ENCODE measurements at regions of chr1 and their contacts with region 1.

Region 1: DNA sequence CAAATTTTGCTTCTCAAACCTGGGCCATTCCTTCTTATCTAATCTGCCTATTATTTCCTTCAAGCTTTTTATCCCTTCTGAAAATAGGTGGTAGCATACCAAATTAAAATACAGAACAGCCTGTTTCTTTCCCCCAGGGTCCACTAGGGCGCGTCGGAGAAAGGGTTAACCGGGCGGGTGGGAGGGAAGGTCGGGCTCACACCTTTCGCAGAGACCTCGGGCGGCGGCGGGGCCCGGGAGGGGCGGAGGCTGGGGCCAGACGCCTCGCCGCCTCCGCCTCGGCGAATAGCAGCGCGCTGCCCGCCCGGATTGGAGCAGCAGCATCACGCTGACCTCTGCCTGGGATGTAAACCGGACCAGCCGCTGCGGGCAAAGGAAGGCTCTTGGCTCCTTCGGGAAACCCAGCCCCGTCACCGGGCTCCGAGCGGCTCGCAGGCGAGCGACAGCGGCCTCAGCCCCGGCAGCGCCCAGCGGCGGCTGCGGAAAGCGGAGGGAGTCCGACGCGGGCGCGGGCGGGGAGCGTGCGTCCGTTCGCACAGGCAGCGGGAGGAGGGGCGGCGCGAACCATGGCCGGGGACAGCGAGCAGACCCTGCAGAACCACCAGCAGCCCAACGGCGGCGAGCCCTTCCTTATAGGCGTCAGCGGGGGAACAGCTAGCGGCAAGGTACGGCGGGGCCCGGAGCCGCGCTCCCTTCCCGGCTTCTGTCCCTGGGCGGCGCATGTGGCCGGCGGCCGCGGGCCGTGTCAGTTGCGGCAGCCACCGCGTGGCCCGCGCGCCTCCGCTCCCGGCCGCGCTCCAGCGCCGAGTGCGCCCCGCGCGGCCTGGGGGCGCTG is at the start of gene UCK2:
- DNase-seq: peak; percentile 43
- H3K4me3 ChIP-seq: peak within 1 kb of the TSS; percentile 88
- H3K27ac ChIP-seq: peak within 1 kb of the TSS; percentile 86
- H3K27me3 ChIP-seq: no peaks in the 10 kb centered on the region
- CTCF ChIP-seq: no peak
- polyA plus RNA-seq, gene UCK2: 52.7 and 59.1 TPM in 2 replicates

Region 2: DNA sequence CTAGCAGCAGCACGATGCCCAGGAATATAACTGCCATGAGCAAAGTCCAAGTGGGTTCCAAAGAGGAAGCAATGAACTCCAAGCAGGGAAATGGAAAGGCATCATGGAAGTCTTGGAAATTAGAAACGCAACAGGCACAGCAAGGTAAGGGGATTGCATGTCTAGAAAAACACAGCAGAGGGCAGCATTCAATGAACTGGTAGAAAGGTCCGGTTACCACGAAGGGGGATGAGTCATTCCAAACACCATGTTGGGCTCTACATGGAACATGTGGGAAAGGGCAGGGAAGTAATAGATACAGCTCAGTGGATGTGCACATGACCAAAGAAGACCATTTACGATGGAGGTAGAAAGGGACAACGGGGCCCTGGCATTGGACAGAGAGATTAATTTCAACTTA is 419.0 kb before region 1 on chr1:
- CTCF ChIA-PET with region 1: no interaction called
- POLR2A ChIA-PET with region 1: no interaction called
- DNase-seq: no peak
- H3K4me3 ChIP-seq: no peak overlapping the region
- H3K27ac ChIP-seq: no peak overlapping the region
- H3K27me3 ChIP-seq: peaks cover 2% of the 10 kb centered on the region
- CTCF ChIP-seq: no peak

Region 3: DNA sequence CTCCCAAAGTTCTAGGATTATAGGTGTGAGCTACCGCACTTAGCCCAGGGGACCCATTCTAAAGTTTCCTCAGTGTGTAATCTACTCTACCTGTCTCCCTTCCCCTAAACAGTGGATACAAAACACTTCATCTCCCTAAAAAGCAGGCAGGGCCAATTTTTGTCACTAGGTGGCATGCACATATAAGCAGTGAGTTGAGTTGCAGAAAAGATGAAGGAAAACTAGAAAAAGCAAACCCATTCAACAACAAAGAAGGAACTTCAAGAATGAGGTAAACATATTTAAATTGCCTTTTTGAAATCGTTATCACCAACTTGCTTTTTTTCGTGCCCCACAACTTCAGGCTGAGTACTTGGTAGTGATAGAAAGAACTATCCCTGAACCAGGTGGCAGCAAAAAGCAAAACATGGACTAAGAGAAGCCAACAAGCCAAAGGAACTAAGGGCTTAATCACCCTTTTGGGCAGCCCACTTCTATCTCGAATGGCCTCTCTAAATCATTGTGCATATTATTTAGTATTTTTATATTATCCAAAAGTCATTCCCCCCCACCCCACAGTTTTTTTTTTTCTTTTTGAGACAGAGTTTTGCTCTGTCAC is 109.5 kb before region 1 on chr1:
- CTCF ChIA-PET with region 1: interaction called, 16 read pairs
- POLR2A ChIA-PET with region 1: no interaction called
- DNase-seq: peak; percentile 33
- H3K4me3 ChIP-seq: no peak overlapping the region
- H3K27ac ChIP-seq: no peak overlapping the region
- H3K27me3 ChIP-seq: no peaks in the 10 kb centered on the region
- CTCF ChIP-seq: peak; percentile 95

Region 4: GRCh38 chr1:165768513-165769394 is 58.7 kb before region 1 on chr1 and contains the start of gene TMCO1:
- CTCF ChIA-PET with region 1: interaction called, 7 read pairs
- POLR2A ChIA-PET with region 1: interaction called, 20 read pairs
- DNase-seq: peak; percentile 97
- H3K4me3 ChIP-seq: peak within 1 kb of the TSS; percentile 88
- H3K27ac ChIP-seq: peak within 1 kb of the TSS; percentile 94
- H3K27me3 ChIP-seq: no peaks in the 10 kb centered on the region
- CTCF ChIP-seq: peak; percentile 36
- polyA plus RNA-seq, gene TMCO1: 188 and 200 TPM in 2 replicates

Region 5: DNA sequence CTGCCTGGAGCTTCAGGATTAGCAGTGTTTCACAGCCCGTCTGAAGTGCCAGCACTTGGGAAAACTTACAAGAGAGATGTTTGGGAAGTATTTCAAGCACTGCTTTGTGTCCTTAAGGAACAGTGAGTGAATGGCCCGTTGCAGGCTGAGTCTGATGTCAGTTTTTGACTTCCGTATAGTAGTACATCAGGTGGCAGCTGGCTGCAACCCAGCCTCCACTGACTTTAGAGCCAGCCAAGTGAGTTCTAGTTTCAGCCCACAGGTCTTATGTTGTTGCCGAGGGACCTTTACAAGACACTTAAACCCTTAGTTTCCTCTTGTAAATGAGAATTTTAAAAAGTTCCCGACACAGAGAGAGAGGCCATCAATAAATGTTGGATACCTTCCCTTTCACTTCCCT is 35.0 kb after region 1 on chr1:
- CTCF ChIA-PET with region 1: no interaction called
- POLR2A ChIA-PET with region 1: no interaction called
- DNase-seq: no peak
- H3K4me3 ChIP-seq: no peak overlapping the region
- H3K27ac ChIP-seq: no peak overlapping the region
- H3K27me3 ChIP-seq: no peaks in the 10 kb centered on the region
- CTCF ChIP-seq: no peak

Region 6: GRCh38 chr1:165898837-165899236 is 71.4 kb after region 1 on chr1:
- CTCF ChIA-PET with region 1: interaction called, 3 read pairs
- POLR2A ChIA-PET with region 1: interaction called, 10 read pairs
- DNase-seq: peak; percentile 98
- H3K4me3 ChIP-seq: no peak overlapping the region
- H3K27ac ChIP-seq: peak overlapping the region; percentile 100
- H3K27me3 ChIP-seq: no peaks in the 10 kb centered on the region
- CTCF ChIP-seq: 0 out of 2 replicates have a peak, but pooled peaks have one; percentile 1

Measured in AG04450 (cell line).